ENCODE measurements at regions of chr22 and their contacts with region 1.

Region 1: DNA sequence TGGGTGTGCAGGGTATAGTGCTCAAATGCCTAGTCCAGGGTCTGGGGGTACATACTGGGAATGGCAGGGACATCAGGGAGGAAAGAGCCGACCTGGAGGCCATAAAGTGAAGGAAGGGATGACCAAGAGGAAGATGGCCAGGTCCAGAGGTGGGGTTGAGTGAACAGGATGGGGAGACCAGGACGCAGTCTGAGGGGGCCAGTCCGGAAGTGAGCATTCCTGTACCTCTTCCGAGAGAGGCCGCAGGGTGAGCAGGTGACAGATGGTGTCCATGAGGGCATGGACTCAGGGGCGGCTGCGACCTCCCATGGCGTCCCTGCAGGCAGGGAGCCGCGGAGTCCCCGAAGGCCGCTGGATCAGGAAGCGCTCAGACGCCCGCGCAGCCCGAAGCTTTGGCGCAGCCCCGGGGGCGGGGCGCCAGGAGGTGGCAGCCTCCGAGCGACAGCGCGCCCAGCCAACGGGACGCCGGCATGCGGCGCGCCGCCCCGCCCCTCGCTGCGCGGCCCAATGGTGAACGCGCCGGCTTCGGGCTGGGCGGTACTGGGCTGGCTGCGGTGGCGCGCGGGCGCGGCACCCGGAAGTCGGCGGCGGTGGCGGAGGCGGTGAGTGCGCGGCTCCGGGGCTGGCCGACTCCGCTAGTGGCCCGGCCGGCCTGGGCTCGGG is at the start of gene TANGO2:
- DNase-seq: peak; percentile 96
- H3K4me3 ChIP-seq: peak within 1 kb of the TSS; percentile 83
- H3K27ac ChIP-seq: no peak within 1 kb of the TSS
- H3K4me1 ChIP-seq: peaks cover 32% of the 10 kb centered on the region
- CTCF ChIP-seq: no peak
- total RNA-seq, gene TANGO2: 12.3 and 18.3 TPM in 2 replicates

Region 2: DNA sequence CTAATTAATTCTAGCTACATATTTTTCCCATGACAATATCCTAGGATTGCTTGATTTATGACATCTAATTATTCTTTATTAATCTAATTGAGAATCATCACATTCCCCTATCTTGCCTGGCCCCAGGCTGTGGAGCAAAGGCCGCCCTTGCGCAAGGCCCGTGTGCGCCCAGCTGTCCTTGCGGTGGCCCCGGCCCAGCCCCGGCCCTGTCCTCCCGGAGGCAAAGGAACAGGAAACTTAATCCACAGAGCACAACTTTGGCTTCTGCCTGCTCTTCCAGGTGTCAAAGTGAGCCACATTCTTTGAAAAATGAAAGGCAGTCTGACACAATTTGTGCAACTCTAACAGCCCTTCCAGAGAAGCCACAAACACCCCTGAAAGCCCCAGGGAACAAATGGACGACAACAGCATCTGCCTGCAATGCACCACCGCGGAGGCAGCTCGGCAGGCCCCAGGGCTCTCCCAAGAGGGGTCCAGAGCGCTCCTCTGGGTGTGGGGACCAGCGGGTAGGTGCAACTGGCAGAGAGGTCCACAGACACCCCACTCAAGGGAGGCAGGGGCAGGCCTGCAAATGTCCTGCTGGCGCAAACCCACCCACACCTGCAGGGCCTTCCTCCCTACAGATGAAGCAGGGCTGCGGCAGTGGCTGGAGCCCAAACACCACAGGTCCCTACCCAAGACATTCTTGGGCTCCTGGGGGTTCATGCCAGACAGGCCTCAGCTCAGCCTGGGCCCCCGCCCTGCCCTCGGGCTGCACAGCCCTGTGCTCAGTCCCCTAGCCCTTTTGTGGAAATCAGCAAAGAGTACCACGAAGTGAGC is 196.3 kb before region 1 on chr22:
- CTCF ChIA-PET with region 1: no interaction called
- POLR2A ChIA-PET with region 1: no interaction called
- intact Hi-C with region 1: no loop called
- DNase-seq: no peak
- H3K4me3 ChIP-seq: no peak overlapping the region
- H3K27ac ChIP-seq: no peak overlapping the region
- H3K4me1 ChIP-seq: no peaks in the 10 kb centered on the region
- CTCF ChIP-seq: no peak

Region 3: GRCh38 chr22:19986410-19987341 is 34.0 kb before region 1 on chr22:
- CTCF ChIA-PET with region 1: no interaction called
- POLR2A ChIA-PET with region 1: no interaction called
- intact Hi-C with region 1: no loop called
- DNase-seq: peak; percentile 79
- H3K4me3 ChIP-seq: peak overlapping the region; percentile 67
- H3K27ac ChIP-seq: no peak overlapping the region
- H3K4me1 ChIP-seq: peaks cover 8% of the 10 kb centered on the region
- CTCF ChIP-seq: no peak

Region 4: GRCh38 chr22:20205964-20206708 is 185.5 kb after region 1 on chr22:
- CTCF ChIA-PET with region 1: interaction called, 10 read pairs
- POLR2A ChIA-PET with region 1: no interaction called
- intact Hi-C with region 1: no loop called
- DNase-seq: peak; percentile 82
- H3K4me3 ChIP-seq: peak overlapping the region; percentile 79
- H3K27ac ChIP-seq: peak overlapping the region; percentile 26
- H3K4me1 ChIP-seq: peaks cover 15% of the 10 kb centered on the region
- CTCF ChIP-seq: no peak

Measured in OCI-LY7 (cell line).